Mammary epithelial cell (primary cell): ENCODE measurements at regions of chr12 and their contacts with region 1.

Region 1: GRCh38 chr12:47527816-47528215 is 178.0 kb downstream of the RPAP3 start:
- DNase-seq: no peak
- H3K4me3 ChIP-seq: no peak overlapping the region
- H3K27ac ChIP-seq: no peak overlapping the region
- H3K4me1 ChIP-seq: no peaks in the 10 kb centered on the region
- H3K27me3 ChIP-seq: no peaks in the 10 kb centered on the region
- CTCF ChIP-seq: no peak

Region 2: DNA sequence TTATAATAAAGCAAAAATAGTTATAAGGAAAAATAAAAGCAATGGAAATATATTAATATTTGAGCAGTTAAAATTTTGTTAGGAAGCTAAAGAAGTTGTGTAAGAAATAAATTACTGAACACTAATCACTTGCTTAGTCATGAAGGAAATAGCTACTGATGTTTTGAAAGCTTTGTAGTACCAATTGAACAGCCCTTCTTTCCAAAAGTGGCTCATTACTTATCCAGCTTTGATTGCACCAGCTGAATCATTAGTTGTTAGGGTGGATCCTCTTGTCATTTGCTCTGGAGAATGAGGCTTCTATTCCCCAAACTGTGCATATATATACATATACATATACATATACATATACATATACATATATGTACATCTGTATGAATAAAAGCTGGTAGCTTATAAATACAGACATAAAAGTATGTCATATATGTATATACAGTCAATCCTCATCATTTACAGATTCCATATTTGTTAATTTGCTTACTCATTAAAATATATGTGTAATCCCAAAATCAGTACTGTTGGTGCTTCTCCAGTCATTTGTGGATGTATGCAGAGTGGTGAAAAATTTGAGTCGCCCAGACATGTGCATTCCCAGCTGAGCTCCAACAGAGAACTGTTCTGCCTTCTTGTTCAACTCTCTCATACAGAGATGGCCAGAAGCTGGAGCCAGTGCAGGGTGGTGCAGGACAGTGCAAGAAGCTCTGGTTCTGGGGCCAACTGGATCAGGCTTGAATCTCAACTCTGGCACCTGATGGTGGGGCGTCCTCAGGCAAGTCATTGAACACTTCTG is 36.1 kb before region 1 on chr12:
- CTCF ChIA-PET with region 1: no interaction called
- dilution Hi-C with region 1: loop called (anchors 5 kb)
- in situ Hi-C with region 1: no loop called
- intact Hi-C with region 1: no loop called
- DNase-seq: peak; percentile 13
- H3K4me3 ChIP-seq: no peak overlapping the region
- H3K27ac ChIP-seq: no peak overlapping the region
- H3K4me1 ChIP-seq: no peaks in the 10 kb centered on the region
- H3K27me3 ChIP-seq: peaks cover 4% of the 10 kb centered on the region
- CTCF ChIP-seq: no peak